Activated T-helper 1 cell treated with anti-CD3 and anti-CD28 coated beads, Interleukin-12 subunit alpha, Interleukin-12 subunit beta, Interleukin-2, Interleukin-4 antibody, amounts not matched to agents 30 ng/mL and 10 ng/mL and 1 ng/mL, durations not matched to agents 14 hours and 24 hours and 36 hours (primary cell): ENCODE measurements at regions of chrX and their contacts with region 1.

Region 1: GRCh38 chrX:31036895-31037294 is 34.9 kb downstream of the FTHL17 start:
- DNase-seq: no peak
- H3K4me3 Mint-ChIP-seq: no peak overlapping the region
- H3K27ac Mint-ChIP-seq: no peak overlapping the region
- H3K4me1 Mint-ChIP-seq: peaks cover 14% of the 10 kb centered on the region
- H3K27me3 Mint-ChIP-seq: peaks cover 7% of the 10 kb centered on the region

Region 2: DNA sequence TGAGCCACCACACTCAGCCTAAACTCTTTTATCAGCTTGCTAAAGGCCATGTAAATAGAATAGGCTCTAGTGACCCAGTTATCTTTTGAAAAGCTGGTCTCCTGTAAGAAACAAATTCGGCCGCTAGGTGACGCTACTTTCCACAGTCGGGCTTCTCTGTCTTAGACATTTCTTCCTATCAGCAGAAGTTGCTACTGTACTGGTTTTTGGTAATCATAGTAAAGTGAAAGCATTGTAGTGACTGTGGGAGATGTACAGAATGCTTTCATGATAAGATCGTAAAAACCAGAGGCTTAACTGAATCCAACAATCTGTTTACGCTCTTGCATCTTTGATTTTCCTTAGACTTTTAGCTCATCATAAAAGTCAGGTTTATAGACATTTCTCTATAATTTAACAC is 301.1 kb before region 1 on chrX:
- intact Hi-C with region 1: loop called (anchors 2 kb)
- DNase-seq: peak; percentile 64
- H3K4me3 Mint-ChIP-seq: no peak overlapping the region
- H3K27ac Mint-ChIP-seq: no peak overlapping the region
- H3K4me1 Mint-ChIP-seq: peaks cover 11% of the 10 kb centered on the region
- H3K27me3 Mint-ChIP-seq: no peaks in the 10 kb centered on the region

Region 3: GRCh38 chrX:31061091-31061490 is 24.2 kb after region 1 on chrX:
- intact Hi-C with region 1: no loop called
- DNase-seq: no peak
- H3K4me3 Mint-ChIP-seq: no peak overlapping the region
- H3K27ac Mint-ChIP-seq: no peak overlapping the region
- H3K4me1 Mint-ChIP-seq: peaks cover 23% of the 10 kb centered on the region
- H3K27me3 Mint-ChIP-seq: no peaks in the 10 kb centered on the region

Region 4: GRCh38 chrX:31213941-31214340 is 177.0 kb after region 1 on chrX:
- intact Hi-C with region 1: loop called (anchors 1 kb)
- DNase-seq: no peak
- H3K4me3 Mint-ChIP-seq: no peak overlapping the region
- H3K27ac Mint-ChIP-seq: no peak overlapping the region
- H3K4me1 Mint-ChIP-seq: peaks cover 16% of the 10 kb centered on the region
- H3K27me3 Mint-ChIP-seq: no peaks in the 10 kb centered on the region

Region 5: GRCh38 chrX:31293409-31293808 is 256.5 kb after region 1 on chrX:
- intact Hi-C with region 1: loop called (anchors 1 kb)
- DNase-seq: no peak
- H3K4me3 Mint-ChIP-seq: no peak overlapping the region
- H3K27ac Mint-ChIP-seq: no peak overlapping the region
- H3K4me1 Mint-ChIP-seq: no peaks in the 10 kb centered on the region
- H3K27me3 Mint-ChIP-seq: peaks cover 2% of the 10 kb centered on the region

Region 6: DNA sequence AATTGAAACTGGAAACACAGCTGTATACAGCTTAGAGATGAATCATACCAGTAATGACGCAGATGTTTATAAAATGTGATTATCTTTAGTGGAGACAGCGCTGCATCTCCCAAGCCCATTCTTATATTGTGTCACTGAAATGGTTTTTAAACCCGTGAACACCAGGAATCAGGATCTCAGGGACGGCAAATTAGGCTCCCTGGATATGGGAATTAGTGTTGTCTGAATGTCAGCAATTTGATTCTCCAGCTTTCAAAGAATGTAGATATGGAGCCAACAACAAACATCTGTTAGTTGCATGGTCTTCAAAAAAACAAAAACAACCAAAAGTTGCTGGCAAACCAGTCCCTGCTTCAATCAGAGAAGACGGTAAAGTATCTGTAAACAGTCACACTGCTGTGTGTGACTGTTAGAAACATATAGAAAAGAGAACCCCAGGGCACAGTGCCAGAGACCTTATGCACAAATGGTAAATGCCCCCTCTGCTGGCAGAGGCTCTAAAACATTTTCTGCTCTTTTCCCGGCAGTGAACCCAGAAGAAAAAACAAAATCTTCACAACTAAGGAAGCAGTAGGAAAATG is 386.8 kb after region 1 on chrX:
- intact Hi-C with region 1: loop called (anchors 1 kb)
- DNase-seq: no peak
- H3K4me3 Mint-ChIP-seq: no peak overlapping the region
- H3K27ac Mint-ChIP-seq: no peak overlapping the region
- H3K4me1 Mint-ChIP-seq: no peaks in the 10 kb centered on the region
- H3K27me3 Mint-ChIP-seq: peaks cover 4% of the 10 kb centered on the region

Region 7: DNA sequence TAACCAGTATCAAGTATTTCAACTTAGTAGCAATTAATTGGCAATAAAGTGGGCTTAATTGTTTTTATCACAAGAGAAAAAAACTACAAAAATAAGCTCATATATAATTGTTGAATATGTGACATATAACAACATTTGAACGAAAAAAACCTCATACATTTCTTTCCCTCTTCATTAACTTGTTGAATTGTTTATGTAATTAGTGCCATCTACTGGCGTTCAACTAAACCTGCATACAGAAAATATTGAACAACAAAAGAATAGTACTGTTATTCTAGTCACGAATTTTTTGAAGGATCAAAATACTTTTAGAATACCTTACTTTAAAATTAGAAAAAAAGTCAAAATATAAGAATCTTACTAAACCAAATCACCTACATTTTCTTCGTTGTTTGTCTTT is 621.5 kb after region 1 on chrX:
- intact Hi-C with region 1: loop called (anchors 1 kb)
- DNase-seq: no peak
- H3K4me3 Mint-ChIP-seq: no peak overlapping the region
- H3K27ac Mint-ChIP-seq: no peak overlapping the region
- H3K4me1 Mint-ChIP-seq: no peaks in the 10 kb centered on the region
- H3K27me3 Mint-ChIP-seq: no peaks in the 10 kb centered on the region